ENCODE measurements at regions of chr9 and their contacts with region 1.

Region 1: DNA sequence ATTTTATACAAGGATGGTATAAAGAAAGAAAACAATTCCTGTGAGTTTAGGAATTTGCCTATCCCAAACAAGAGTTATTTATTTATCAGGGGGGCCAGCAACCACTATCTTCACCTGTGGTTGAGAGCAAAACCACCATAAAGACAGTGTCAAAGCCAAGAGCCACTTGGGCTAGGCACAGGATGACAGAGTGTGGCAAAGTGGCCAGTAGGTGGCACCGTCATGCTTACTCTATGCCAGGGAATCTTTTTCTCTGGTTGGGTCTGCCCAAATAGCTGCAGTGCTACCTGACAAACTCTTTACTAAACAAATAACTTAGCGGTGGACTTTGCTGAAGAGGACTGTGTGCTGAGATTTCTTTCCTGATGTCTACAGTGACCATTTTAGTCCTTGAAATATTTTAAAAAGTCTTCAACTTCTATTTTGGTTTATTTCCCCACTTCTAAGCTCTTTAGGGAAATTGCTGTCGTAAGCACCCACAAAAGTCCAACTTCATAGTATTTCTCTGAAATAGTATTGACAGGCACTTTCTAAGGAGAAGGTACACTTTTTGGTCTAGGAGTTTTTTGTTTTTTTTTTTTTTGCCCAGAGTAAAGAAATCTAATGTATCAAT is 285.0 kb downstream of the RFX3 start:
- DNase-seq: peak; percentile 49 to 72
- ATAC-seq: peak; percentile 98 to 100
- H3K4me3 ChIP-seq: no peak overlapping the region
- H3K27ac ChIP-seq: no peak overlapping the region
- H3K4me1 ChIP-seq: no peaks in the 10 kb centered on the region
- CTCF ChIP-seq: peak; percentile 83
- EP300 ChIP-seq: no peak
- POLR2A ChIP-seq: no peak
- RAD21 ChIP-seq: peak; percentile 78 to 80

Region 2: GRCh38 chr9:3018076-3018475 is 222.7 kb before region 1 on chr9:
- CTCF ChIA-PET with region 1: no interaction called
- POLR2A ChIA-PET with region 1: no interaction called
- DNase-seq: no peak
- ATAC-seq: no peak
- H3K4me3 ChIP-seq: no peak overlapping the region
- H3K27ac ChIP-seq: no peak overlapping the region
- H3K4me1 ChIP-seq: no peaks in the 10 kb centered on the region
- CTCF ChIP-seq: no peak
- EP300 ChIP-seq: no peak
- POLR2A ChIP-seq: no peak
- RAD21 ChIP-seq: no peak

Region 3: GRCh38 chr9:3441197-3441816 is 200.5 kb after region 1 on chr9:
- CTCF ChIA-PET with region 1: interaction called, 14 read pairs
- POLR2A ChIA-PET with region 1: no interaction called
- DNase-seq: peak; percentile 34 to 74
- ATAC-seq: peak; percentile 87 to 89
- H3K4me3 ChIP-seq: no peak overlapping the region
- H3K27ac ChIP-seq: no peak overlapping the region
- H3K4me1 ChIP-seq: no peaks in the 10 kb centered on the region
- CTCF ChIP-seq: peak; percentile 55; the same call in 2 of the 3 replicates
- EP300 ChIP-seq: no peak
- POLR2A ChIP-seq: no peak
- RAD21 ChIP-seq: peak; percentile 56 to 58; a peak in 4 of 5 replicates

Measured in A549 (cell line).